ENCODE measurements at regions of chr3 and their contacts with region 1.

Region 1: GRCh38 chr3:189805375-189806067 is 174.3 kb downstream of the TP63 start:
- DNase-seq: no peak
- ATAC-seq: no peak
- H3K4me3 ChIP-seq: no peak overlapping the region
- H3K27ac ChIP-seq: no peak overlapping the region
- H3K4me1 ChIP-seq: no peaks in the 10 kb centered on the region
- H3K27me3 ChIP-seq: no peaks in the 10 kb centered on the region

Region 2: DNA sequence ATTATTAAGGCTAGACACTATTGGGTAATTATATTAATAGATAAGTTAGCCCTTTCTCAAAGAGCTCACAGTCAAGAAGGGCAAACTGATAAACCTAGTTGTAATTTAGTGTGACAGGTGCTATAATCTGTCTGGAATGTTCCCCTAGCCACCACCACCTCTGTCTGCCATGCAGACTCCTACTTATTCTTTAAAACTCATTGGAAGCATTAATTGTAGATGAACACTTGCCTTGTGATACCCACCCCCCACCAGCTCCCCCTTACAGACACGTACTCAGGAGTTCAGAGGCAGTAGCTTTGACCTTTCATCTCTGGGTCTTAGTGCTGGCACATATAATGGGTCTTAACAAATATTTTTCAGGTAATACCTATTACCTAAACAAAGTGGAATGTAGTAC is 21.6 kb after region 1 on chr3:
- intact Hi-C with region 1: loop called in 1 of 4 experiments (anchors 2 kb)
- DNase-seq: no peak
- ATAC-seq: no peak
- H3K4me3 ChIP-seq: no peak overlapping the region
- H3K27ac ChIP-seq: no peak overlapping the region
- H3K4me1 ChIP-seq: no peaks in the 10 kb centered on the region
- H3K27me3 ChIP-seq: no peaks in the 10 kb centered on the region

Measured in right cardiac atrium (tissue), 5 donors.